ENCODE measurements at regions of chr9 and their contacts with region 1.

Region 1: DNA sequence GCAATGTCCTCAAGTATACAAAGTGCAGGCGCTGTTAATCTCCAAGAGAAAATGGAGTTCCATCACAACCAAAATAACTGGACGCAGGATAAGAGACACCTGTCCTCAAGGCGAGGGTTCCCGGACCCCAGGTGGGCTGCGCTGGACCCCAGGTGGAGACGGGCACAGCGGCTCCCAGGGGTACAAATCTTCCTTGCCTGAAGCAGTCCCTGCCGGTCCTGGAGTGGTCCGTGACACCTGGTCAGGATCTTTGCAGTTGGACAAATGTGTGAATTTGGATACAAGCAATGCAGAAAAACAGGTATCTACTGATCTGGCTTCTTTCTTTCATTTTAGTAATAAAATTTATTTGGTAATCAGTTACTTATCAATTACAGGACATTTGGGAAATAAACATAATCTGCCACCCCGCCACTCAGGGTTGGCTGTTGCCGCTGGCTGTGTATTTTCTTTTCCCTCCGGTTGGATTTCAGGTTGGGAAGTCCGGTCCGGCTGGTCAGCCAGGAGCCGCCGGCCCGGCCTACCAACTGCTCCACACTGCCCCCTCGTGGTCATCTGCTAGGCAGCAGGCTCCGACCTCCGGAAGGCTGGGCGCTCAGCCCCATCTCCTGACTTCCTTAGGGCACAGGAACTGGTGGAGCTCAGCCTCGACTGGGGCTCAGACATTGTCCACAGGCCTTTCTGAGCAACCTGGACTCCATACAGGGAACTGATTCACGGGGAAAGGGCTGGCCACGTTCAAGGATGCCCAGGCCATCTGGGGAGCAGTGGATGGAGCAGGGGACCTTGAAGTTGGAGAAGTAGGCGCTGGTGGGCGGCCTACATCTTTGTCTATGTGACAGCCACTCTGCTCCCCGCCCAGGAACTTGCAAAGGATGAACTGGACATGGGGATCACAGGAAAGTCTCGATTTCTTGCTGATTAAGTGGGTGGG is 43.4 kb downstream of the NXNL2 start:
- DNase-seq: peak; percentile 46
- H3K4me3 Mint-ChIP-seq: no peak overlapping the region
- H3K27ac Mint-ChIP-seq: no peak overlapping the region
- H3K4me1 Mint-ChIP-seq: peaks cover 5% of the 10 kb centered on the region
- H3K27me3 Mint-ChIP-seq: peaks cover 14% of the 10 kb centered on the region

Region 2: GRCh38 chr9:87950765-87951488 is 627.5 kb before region 1 on chr9:
- intact Hi-C with region 1: loop called (anchors 1 kb)
- DNase-seq: no peak
- H3K4me3 Mint-ChIP-seq: no peak overlapping the region
- H3K27ac Mint-ChIP-seq: no peak overlapping the region
- H3K4me1 Mint-ChIP-seq: no peaks in the 10 kb centered on the region
- H3K27me3 Mint-ChIP-seq: peaks cover 18% of the 10 kb centered on the region

Region 3: GRCh38 chr9:88076286-88077090 is 501.9 kb before region 1 on chr9:
- intact Hi-C with region 1: no loop called
- DNase-seq: peak; percentile 5
- H3K4me3 Mint-ChIP-seq: peak overlapping the region; percentile 80
- H3K27ac Mint-ChIP-seq: no peak overlapping the region
- H3K4me1 Mint-ChIP-seq: peaks cover 18% of the 10 kb centered on the region
- H3K27me3 Mint-ChIP-seq: peaks cover 61% of the 10 kb centered on the region

Region 4: GRCh38 chr9:88106491-88106890 is 471.9 kb before region 1 on chr9:
- intact Hi-C with region 1: loop called (anchors 1 kb)
- DNase-seq: peak; percentile 7
- H3K4me3 Mint-ChIP-seq: no peak overlapping the region
- H3K27ac Mint-ChIP-seq: no peak overlapping the region
- H3K4me1 Mint-ChIP-seq: no peaks in the 10 kb centered on the region
- H3K27me3 Mint-ChIP-seq: peaks cover 9% of the 10 kb centered on the region

Region 5: DNA sequence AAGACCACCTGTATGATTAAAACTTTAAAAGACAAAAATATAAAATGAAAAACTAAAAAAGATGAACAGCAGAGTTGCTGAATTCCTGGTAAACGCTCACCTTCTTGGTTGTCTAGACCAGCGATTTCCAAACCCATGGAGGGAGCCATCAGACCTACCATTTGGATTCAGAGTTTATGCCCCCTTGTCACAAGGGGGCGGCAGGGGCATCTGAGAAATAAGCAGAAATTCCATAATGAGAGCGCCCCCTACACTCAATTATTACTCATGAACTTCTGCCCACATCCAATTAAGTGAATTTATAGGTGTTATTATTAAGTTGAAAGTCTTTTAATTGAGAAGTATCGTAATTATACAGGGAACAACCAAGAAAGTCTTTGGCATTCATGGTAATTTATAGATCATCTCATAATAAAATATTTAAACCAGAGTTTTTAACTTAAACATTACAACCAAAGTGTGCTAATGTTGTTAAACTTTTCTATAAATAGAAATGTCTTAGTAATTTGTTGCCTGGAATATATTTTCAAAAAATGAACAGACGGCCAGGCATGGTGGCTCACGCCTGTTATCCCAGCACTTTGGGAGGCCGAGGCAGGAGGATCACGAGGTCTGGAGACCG is 404.9 kb before region 1 on chr9:
- intact Hi-C with region 1: loop called (anchors 1 kb)
- DNase-seq: peak; percentile 15
- H3K4me3 Mint-ChIP-seq: no peak overlapping the region
- H3K27ac Mint-ChIP-seq: no peak overlapping the region
- H3K4me1 Mint-ChIP-seq: peaks cover 2% of the 10 kb centered on the region
- H3K27me3 Mint-ChIP-seq: peaks cover 18% of the 10 kb centered on the region

Region 6: GRCh38 chr9:88218731-88219130 is 359.7 kb before region 1 on chr9:
- intact Hi-C with region 1: no loop called
- DNase-seq: no peak
- H3K4me3 Mint-ChIP-seq: no peak overlapping the region
- H3K27ac Mint-ChIP-seq: no peak overlapping the region
- H3K4me1 Mint-ChIP-seq: no peaks in the 10 kb centered on the region
- H3K27me3 Mint-ChIP-seq: peaks cover 2% of the 10 kb centered on the region

Measured in activated T-helper 1 cell treated with anti-CD3 and anti-CD28 coated beads, Interleukin-12 subunit alpha, Interleukin-12 subunit beta, Interleukin-2, Interleukin-4 antibody, amounts not matched to agents 30 ng/mL and 10 ng/mL and 1 ng/mL, durations not matched to agents 14 hours and 24 hours and 36 hours (primary cell).